K562 (cell line): ENCODE measurements at regions of chr12 and their contacts with region 1.

Region 1: GRCh38 chr12:106357549-106358395 is at the start of gene POLR3B:
- DNase-seq: peak; percentile 95 to 98 (median 96)
- ATAC-seq: peak; percentile 86
- H3K4me3 ChIP-seq: peak within 1 kb of the TSS; percentile 72
- H3K27ac ChIP-seq: peak within 1 kb of the TSS; percentile 94
- H3K4me1 ChIP-seq: peaks cover 14 to 15% of the 10 kb centered on the region in 2 experiments; a peak in 4 of 5 replicates
- H3K27me3 ChIP-seq: no peaks in the 10 kb centered on the region
- CTCF ChIP-seq: peak; percentile 79 to 92 (median 90)
- EP300 ChIP-seq: peak; percentile 30; the same call in 1 of the 2 replicates
- POLR2A ChIP-seq: peak; percentile 94
- RAD21 ChIP-seq: peak; percentile 81 to 82
- polyA plus RNA-seq, gene POLR3B: 7.6 to 16.5 TPM

Region 2: DNA sequence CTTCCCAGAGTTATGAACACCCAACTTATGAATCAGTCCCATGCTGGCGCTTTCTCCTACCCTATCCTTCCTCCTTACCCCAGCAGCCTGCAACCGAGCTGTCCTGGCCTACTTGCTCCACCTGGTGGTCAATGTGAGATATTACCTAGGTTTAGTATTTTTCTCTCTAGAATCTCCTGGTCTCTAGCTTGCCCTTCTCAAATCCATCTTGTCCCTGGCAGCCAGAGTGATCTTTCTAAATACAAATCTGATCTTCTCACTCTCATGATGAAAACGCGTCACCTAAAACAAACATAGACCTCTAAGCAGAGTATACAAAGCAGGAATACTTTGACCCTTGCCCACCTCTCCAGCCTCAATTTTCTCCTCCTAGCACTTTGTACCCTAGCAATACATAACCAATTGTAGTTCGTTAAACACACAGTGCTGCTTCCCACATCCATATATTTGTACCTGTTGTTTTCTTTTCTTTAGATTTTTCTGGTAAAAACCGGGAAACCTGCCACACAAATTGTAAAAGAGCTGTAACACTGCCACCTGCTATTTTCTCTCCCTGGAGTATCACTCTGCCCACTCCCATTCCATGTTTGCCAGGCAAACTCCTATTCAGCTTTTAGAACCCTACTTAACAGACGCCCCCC is 75.2 kb before region 1 on chr12:
- CTCF ChIA-PET with region 1: no interaction called
- POLR2A ChIA-PET with region 1: no interaction called
- in situ Hi-C with region 1: no loop called
- intact Hi-C with region 1: loop called (anchors 5 kb)
- DNase-seq: peak; percentile 67 to 72 (median 71)
- ATAC-seq: peak; percentile 94
- H3K4me3 ChIP-seq: no peak overlapping the region
- H3K27ac ChIP-seq: no peak overlapping the region
- H3K4me1 ChIP-seq: 0 out of 5 replicates have a peak, but pooled peaks cover 0 to 3% of the 10 kb centered on the region in 2 experiments
- H3K27me3 ChIP-seq: peaks cover 0 to 18% of the 10 kb centered on the region in 2 experiments
- CTCF ChIP-seq: peak; percentile 77 to 82 (median 78)
- EP300 ChIP-seq: no peak
- POLR2A ChIP-seq: no peak
- RAD21 ChIP-seq: peak; percentile 71 to 79

Region 3: DNA sequence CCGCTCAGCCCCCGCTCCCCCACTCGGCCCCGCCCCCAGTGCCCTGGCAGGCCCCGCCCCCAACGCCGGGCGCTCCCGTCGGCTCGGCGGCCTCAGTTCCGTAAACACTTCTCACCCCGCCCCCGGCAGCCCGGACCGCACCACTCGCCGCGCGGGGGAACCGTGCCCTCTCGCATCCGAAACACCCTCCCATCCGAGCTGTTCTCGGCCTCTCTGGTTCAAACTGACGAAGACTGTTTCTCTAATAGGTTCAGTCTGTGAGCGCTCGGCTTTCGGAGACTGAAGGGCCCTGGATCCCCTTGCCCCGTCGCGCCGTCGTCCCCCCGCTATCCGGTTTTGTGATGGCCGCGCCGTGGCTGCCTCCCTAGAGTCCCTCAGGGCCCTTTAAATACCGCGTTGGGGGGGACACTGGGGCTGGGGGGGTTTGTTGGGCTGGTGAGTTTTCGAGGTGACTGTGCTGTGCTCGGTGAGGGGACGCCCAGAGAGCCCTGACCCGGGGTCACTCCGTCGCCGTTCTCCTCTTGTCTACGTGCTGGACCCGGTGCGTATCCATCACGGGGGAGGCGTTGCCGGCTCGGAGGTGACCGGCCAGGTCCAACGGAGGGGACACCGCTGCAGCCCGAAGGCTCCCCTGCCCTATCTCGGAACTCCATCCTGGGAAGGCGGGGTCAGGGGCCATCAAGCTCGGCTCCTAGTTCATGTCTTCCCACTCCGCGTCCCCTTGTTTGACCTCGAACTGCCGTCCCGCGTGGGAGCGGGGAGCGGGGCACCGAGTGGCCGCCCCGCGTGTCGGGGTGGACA is 55.2 kb before region 1 on chr12 and contains the start of gene TCP11L2:
- CTCF ChIA-PET with region 1: no interaction called
- POLR2A ChIA-PET with region 1: interaction called, 7 read pairs
- in situ Hi-C with region 1: no loop called
- intact Hi-C with region 1: loop called (anchors 5 kb)
- DNase-seq: peak; percentile 87 to 96 (median 94)
- ATAC-seq: peak; percentile 80
- H3K4me3 ChIP-seq: peak within 1 kb of the TSS; percentile 68
- H3K27ac ChIP-seq: peak within 1 kb of the TSS; percentile 96
- H3K4me1 ChIP-seq: peaks cover 19 to 30% of the 10 kb centered on the region in 2 experiments; a peak in 4 of 5 replicates
- H3K27me3 ChIP-seq: no peaks in the 10 kb centered on the region
- CTCF ChIP-seq: no peak
- EP300 ChIP-seq: no peak
- POLR2A ChIP-seq: no peak
- RAD21 ChIP-seq: no peak
- polyA plus RNA-seq, gene TCP11L2: 0.39 to 1.3 TPM

Region 4: GRCh38 chr12:106506691-106507090 is 148.9 kb after region 1 on chr12:
- CTCF ChIA-PET with region 1: no interaction called
- POLR2A ChIA-PET with region 1: no interaction called
- in situ Hi-C with region 1: no loop called
- intact Hi-C with region 1: no loop called
- DNase-seq: no peak
- ATAC-seq: no peak
- H3K4me3 ChIP-seq: no peak overlapping the region
- H3K27ac ChIP-seq: no peak overlapping the region
- H3K4me1 ChIP-seq: no peaks in the 10 kb centered on the region
- H3K27me3 ChIP-seq: no peaks in the 10 kb centered on the region
- CTCF ChIP-seq: no peak
- EP300 ChIP-seq: no peak
- POLR2A ChIP-seq: no peak
- RAD21 ChIP-seq: no peak

Region 5: DNA sequence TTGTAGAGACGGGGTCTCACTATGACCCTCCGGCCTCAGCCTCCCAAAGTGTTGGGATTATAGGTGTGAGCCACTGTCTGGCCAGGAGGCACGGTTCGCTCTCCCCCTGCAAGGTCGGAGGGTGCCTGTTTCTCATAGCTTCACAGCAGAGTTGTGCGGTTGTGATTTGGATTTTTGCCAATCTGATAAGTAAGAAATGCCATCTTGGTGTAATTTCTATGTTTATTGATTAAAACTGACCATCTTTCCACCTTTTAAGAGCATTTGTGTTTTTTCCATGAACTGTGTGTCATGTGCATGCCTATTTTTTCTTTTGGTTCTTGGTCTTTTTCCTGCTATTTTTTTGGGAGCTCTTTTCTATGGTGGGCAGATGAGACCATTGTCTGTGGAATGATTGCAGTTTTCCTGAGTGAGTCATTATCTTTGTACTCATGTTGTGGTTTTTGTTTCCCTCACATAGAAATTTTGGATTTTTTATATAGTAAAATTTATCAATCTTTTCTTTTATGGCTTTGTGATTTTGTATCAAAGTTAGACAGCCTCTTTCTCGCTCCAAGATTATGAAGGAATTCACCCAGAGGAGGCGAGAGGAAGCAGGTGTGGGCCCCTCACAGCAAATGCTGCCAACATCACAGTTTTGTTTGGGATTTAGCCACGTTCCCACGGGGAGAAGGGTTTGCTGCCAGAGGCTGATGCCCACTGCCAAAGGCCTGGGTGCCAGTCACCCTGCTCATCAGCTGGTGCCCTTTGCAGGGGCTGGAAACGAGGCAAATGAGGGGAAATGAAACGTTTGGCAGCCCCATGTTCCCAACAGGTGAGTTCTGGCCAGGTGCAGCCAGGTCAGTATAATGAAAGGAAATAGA is 272.3 kb after region 1 on chr12:
- CTCF ChIA-PET with region 1: no interaction called
- POLR2A ChIA-PET with region 1: no interaction called
- in situ Hi-C with region 1: no loop called
- intact Hi-C with region 1: no loop called
- DNase-seq: no peak
- ATAC-seq: no peak
- H3K4me3 ChIP-seq: no peak overlapping the region
- H3K27ac ChIP-seq: no peak overlapping the region
- H3K4me1 ChIP-seq: no peaks in the 10 kb centered on the region
- H3K27me3 ChIP-seq: peaks cover 0 to 21% of the 10 kb centered on the region in 2 experiments; a peak in 3 of 5 replicates
- CTCF ChIP-seq: no peak
- EP300 ChIP-seq: no peak
- POLR2A ChIP-seq: no peak
- RAD21 ChIP-seq: no peak

Region 6: DNA sequence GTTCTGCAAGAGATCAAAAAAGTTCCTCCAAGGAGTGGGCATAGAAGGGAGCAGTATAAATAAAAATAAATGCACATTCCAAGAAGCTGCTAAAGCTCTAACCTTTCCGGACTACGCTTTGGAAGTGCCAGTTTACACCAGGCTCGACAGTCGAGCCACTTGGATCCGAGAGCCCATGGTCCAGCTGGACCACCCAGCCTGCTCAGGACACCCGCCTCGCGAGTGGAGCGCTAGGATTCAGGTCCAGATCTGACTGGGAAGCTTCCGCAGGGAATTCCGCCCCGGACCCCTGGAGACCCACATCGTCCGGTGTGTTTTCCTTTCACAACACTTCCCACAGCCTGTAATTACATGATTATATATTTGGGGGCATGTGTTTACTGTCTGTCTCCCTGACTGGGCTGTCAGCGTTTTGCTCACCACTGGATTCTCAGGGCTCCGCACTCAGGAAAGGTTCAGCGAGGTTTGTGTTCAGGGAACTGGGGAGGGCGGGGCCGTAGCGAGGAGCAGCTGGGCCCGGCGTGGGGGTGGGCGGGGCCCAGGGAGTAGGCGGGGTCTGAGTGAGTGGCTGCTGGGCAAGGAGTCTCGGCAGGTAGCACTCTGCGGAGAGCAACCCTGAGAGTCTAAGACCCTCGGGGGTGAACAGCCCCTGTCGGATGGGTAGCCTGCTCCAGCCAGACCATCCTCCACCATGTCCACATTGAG is 545.6 kb after region 1 on chr12:
- CTCF ChIA-PET with region 1: no interaction called
- POLR2A ChIA-PET with region 1: interaction called, 3 read pairs
- in situ Hi-C with region 1: no loop called
- intact Hi-C with region 1: loop called (anchors 10 kb)
- DNase-seq: peak; percentile 87 to 94 (median 90)
- ATAC-seq: peak; percentile 100
- H3K4me3 ChIP-seq: no peak overlapping the region
- H3K27ac ChIP-seq: no peak overlapping the region
- H3K4me1 ChIP-seq: peaks cover 0 to 7% of the 10 kb centered on the region in 2 experiments; a peak in 3 of 5 replicates
- H3K27me3 ChIP-seq: peaks cover 28 to 50% of the 10 kb centered on the region in 2 experiments
- CTCF ChIP-seq: no peak
- EP300 ChIP-seq: no peak
- POLR2A ChIP-seq: no peak
- RAD21 ChIP-seq: no peak